ENCODE measurements at regions of chr2 and their contacts with region 1.

Region 1: GRCh38 chr2:235709124-235709813 is 215.4 kb downstream of the AGAP1 start:
- DNase-seq: peak; percentile 97
- ATAC-seq: peak; percentile 93
- H3K4me3 ChIP-seq: peak overlapping the region; percentile 48; the same call in 1 of the 2 replicates
- H3K27ac ChIP-seq: peak overlapping the region; percentile 96
- H3K4me1 ChIP-seq: peaks cover 48% of the 10 kb centered on the region
- H3K27me3 ChIP-seq: no peaks in the 10 kb centered on the region
- CTCF ChIP-seq: no peak

Region 2: GRCh38 chr2:235666213-235666781 is 43.0 kb before region 1 on chr2:
- CTCF ChIA-PET with region 1: interaction called, 3 read pairs
- POLR2A ChIA-PET with region 1: no interaction called
- intact Hi-C with region 1: loop called (anchors 5 kb)
- DNase-seq: peak; percentile 80
- ATAC-seq: peak; percentile 32
- H3K4me3 ChIP-seq: peak overlapping the region; percentile 66
- H3K27ac ChIP-seq: peak overlapping the region; percentile 42
- H3K4me1 ChIP-seq: peaks cover 22% of the 10 kb centered on the region
- H3K27me3 ChIP-seq: no peaks in the 10 kb centered on the region
- CTCF ChIP-seq: no peak

Region 3: GRCh38 chr2:236569573-236569973 is 860.3 kb after region 1 on chr2 and contains the start of gene ACKR3:
- CTCF ChIA-PET with region 1: no interaction called
- POLR2A ChIA-PET with region 1: no interaction called
- intact Hi-C with region 1: no loop called
- DNase-seq: peak; percentile 82
- ATAC-seq: peak; percentile 99
- H3K4me3 ChIP-seq: peak within 1 kb of the TSS; percentile 70
- H3K27ac ChIP-seq: no peak within 1 kb of the TSS
- H3K4me1 ChIP-seq: peaks cover 21% of the 10 kb centered on the region; the same call in 1 of the 2 replicates
- H3K27me3 ChIP-seq: no peaks in the 10 kb centered on the region
- CTCF ChIP-seq: peak; percentile 66
- total RNA-seq, gene ACKR3: 0.86 and 3.1 TPM in 2 replicates

Measured in PC-3 (cell line).